ENCODE measurements at regions of chrX and their contacts with region 1.

Region 1: GRCh38 chrX:109911046-109911445 is 91.9 kb upstream of the TMEM164 start:
- DNase-seq: no peak
- ATAC-seq: no peak

Region 2: GRCh38 chrX:109742722-109743121 is 168.3 kb before region 1 on chrX:
- intact Hi-C with region 1: no loop called
- DNase-seq: no peak
- ATAC-seq: no peak

Region 3: GRCh38 chrX:110036162-110037033 is 125.4 kb after region 1 on chrX:
- intact Hi-C with region 1: no loop called
- DNase-seq: no peak
- ATAC-seq: peak; percentile 20

Region 4: DNA sequence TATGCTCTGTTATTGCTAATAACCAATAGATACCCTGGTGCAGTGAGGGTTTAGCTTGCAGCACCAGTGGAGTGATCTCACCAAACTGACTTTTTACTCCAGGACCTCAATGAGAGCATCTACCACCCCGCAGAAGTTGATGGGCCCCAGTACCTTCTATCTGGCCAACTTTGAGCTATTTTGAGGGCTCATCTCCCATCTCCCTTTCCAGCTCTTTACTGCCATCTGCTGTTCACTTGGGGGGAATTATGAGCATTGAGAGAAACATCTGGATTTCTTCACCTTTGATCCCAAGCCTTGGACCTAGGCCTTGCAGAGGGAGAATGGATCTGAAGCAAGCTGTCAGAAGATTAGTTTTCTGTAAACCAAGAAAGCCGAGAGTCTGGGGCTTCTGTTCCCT is 235.5 kb after region 1 on chrX:
- intact Hi-C with region 1: loop called (anchors 5 kb)
- DNase-seq: no peak
- ATAC-seq: peak; percentile 75